Activated CD8-positive, alpha-beta T cell treated with anti-CD3 and anti-CD28 coated beads, Interleukin-2, amount 10 ng/mL, durations not matched to agents 7 days and 5 days (primary cell): ENCODE measurements at regions of chr4 and their contacts with region 1.

Region 1: GRCh38 chr4:78634011-78634664 is 82.6 kb downstream of the ANXA3 start:
- DNase-seq: no peak
- ATAC-seq: no peak
- H3K4me3 Mint-ChIP-seq: no peak overlapping the region
- H3K27ac Mint-ChIP-seq: no peak overlapping the region
- H3K4me1 Mint-ChIP-seq: peaks cover 35% of the 10 kb centered on the region
- H3K27me3 Mint-ChIP-seq: peaks cover 4% of the 10 kb centered on the region

Region 2: GRCh38 chr4:78644744-78645330 is 10.7 kb after region 1 on chr4:
- CTCF ChIA-PET with region 1: interaction called, 19 read pairs
- POLR2A ChIA-PET with region 1: interaction called, 3 read pairs
- DNase-seq: peak; percentile 69
- ATAC-seq: peak; percentile 92
- H3K4me3 Mint-ChIP-seq: no peak overlapping the region
- H3K27ac Mint-ChIP-seq: no peak overlapping the region
- H3K4me1 Mint-ChIP-seq: peaks cover 35% of the 10 kb centered on the region
- H3K27me3 Mint-ChIP-seq: no peaks in the 10 kb centered on the region

Region 3: GRCh38 chr4:78764498-78764961 is 130.4 kb after region 1 on chr4:
- CTCF ChIA-PET with region 1: no interaction called
- POLR2A ChIA-PET with region 1: no interaction called
- DNase-seq: no peak
- ATAC-seq: no peak
- H3K4me3 Mint-ChIP-seq: no peak overlapping the region
- H3K27ac Mint-ChIP-seq: no peak overlapping the region
- H3K4me1 Mint-ChIP-seq: peaks cover 8% of the 10 kb centered on the region
- H3K27me3 Mint-ChIP-seq: peaks cover 7% of the 10 kb centered on the region